Caco-2 (cell line): ENCODE measurements at regions of chr13 and their contacts with region 1.

Region 1: GRCh38 chr13:43664700-43665191 is 122.0 kb downstream of the ENOX1 start:
- DNase-seq: peak; percentile 65 to 72
- H3K4me3 ChIP-seq: no peak overlapping the region
- H3K4me3 Mint-ChIP-seq: no peak overlapping the region
- H3K27ac Mint-ChIP-seq: no peak overlapping the region
- H3K4me1 ChIP-seq: peaks cover 61% of the 10 kb centered on the region
- H3K4me1 Mint-ChIP-seq: peaks cover 38% of the 10 kb centered on the region
- H3K27me3 ChIP-seq: no peaks in the 10 kb centered on the region
- H3K27me3 Mint-ChIP-seq: no peaks in the 10 kb centered on the region
- CTCF ChIP-seq: no peak

Region 2: DNA sequence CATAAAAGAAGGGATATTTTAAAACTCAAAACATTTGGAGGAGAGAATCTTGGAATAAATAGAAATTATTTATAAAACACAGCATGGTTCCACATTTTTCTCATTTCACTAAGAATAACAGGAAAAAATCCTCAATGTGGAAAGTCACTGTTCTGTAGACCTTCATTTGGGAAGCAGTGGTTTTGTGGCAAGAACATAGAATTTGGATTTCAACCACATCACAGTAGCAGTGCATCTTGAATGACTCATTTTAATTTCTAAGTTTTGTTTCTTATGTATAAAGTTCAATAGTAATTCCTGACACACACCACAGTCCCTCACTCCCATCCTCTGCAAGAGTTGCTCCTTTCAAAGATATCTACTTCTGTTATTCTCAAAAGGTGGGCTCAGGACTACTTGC is 142.0 kb before region 1 on chr13:
- CTCF ChIA-PET with region 1: no interaction called
- POLR2A ChIA-PET with region 1: no interaction called
- intact Hi-C with region 1: no loop called
- DNase-seq: no peak
- H3K4me3 ChIP-seq: no peak overlapping the region
- H3K4me3 Mint-ChIP-seq: no peak overlapping the region
- H3K27ac Mint-ChIP-seq: no peak overlapping the region
- H3K4me1 ChIP-seq: peaks cover 2% of the 10 kb centered on the region
- H3K4me1 Mint-ChIP-seq: peaks cover 9% of the 10 kb centered on the region
- H3K27me3 ChIP-seq: no peaks in the 10 kb centered on the region
- H3K27me3 Mint-ChIP-seq: no peaks in the 10 kb centered on the region
- CTCF ChIP-seq: no peak

Region 3: GRCh38 chr13:43611281-43612273 is 53.2 kb before region 1 on chr13:
- CTCF ChIA-PET with region 1: no interaction called
- POLR2A ChIA-PET with region 1: no interaction called
- intact Hi-C with region 1: no loop called
- DNase-seq: no peak
- H3K4me3 ChIP-seq: no peak overlapping the region
- H3K4me3 Mint-ChIP-seq: no peak overlapping the region
- H3K27ac Mint-ChIP-seq: no peak overlapping the region
- H3K4me1 ChIP-seq: no peaks in the 10 kb centered on the region
- H3K4me1 Mint-ChIP-seq: no peaks in the 10 kb centered on the region
- H3K27me3 ChIP-seq: no peaks in the 10 kb centered on the region
- H3K27me3 Mint-ChIP-seq: no peaks in the 10 kb centered on the region
- CTCF ChIP-seq: no peak

Region 4: DNA sequence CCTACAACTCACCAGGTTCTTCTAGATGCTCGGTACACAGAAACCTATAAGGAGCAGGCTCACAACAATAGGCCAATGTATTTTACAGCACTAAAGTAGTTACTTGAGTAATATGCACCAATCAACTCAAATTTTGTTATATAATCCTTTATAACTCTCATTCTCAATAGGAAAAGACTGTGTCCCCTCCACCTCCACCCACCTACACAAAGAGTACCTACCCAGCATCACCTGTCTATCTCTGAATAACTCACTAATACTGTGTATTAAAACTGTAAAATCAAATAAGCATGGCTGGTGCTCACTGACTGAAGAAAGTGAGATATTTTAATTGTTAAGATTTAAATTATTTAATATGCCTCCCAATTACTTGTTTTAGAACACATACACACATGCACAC is 24.3 kb before region 1 on chr13:
- CTCF ChIA-PET with region 1: no interaction called
- POLR2A ChIA-PET with region 1: no interaction called
- intact Hi-C with region 1: no loop called
- DNase-seq: no peak
- H3K4me3 ChIP-seq: no peak overlapping the region
- H3K4me3 Mint-ChIP-seq: no peak overlapping the region
- H3K27ac Mint-ChIP-seq: no peak overlapping the region
- H3K4me1 ChIP-seq: no peaks in the 10 kb centered on the region
- H3K4me1 Mint-ChIP-seq: no peaks in the 10 kb centered on the region
- H3K27me3 ChIP-seq: no peaks in the 10 kb centered on the region
- H3K27me3 Mint-ChIP-seq: no peaks in the 10 kb centered on the region
- CTCF ChIP-seq: no peak

Region 5: GRCh38 chr13:43686557-43686956 is 21.8 kb after region 1 on chr13:
- CTCF ChIA-PET with region 1: no interaction called
- POLR2A ChIA-PET with region 1: no interaction called
- intact Hi-C with region 1: loop called (anchors 2 kb)
- DNase-seq: peak; percentile 25 to 41
- H3K4me3 ChIP-seq: no peak overlapping the region
- H3K4me3 Mint-ChIP-seq: no peak overlapping the region
- H3K27ac Mint-ChIP-seq: no peak overlapping the region
- H3K4me1 ChIP-seq: peaks cover 24% of the 10 kb centered on the region
- H3K4me1 Mint-ChIP-seq: peaks cover 17% of the 10 kb centered on the region
- H3K27me3 ChIP-seq: no peaks in the 10 kb centered on the region
- H3K27me3 Mint-ChIP-seq: no peaks in the 10 kb centered on the region
- CTCF ChIP-seq: no peak

Region 6: DNA sequence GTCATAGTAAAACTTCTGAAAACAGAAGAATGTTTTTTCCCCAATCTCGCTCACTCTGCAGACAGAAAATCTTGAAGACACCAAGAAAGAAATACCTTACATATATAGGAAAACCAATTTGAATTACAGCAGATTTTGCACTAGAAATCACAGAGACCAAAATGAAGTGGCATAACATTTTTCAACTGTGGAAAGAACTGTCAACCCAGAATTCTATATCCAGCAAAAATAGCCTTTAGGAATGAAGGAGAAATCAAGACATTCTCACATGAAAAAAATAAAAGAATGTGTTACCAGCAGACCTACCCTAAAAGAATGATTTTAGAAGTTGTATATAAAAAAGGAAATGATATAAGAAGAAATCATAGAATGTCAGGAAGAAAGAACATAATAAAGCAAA is 186.1 kb after region 1 on chr13:
- CTCF ChIA-PET with region 1: no interaction called
- POLR2A ChIA-PET with region 1: no interaction called
- intact Hi-C with region 1: no loop called
- DNase-seq: no peak
- H3K4me3 ChIP-seq: no peak overlapping the region
- H3K4me3 Mint-ChIP-seq: no peak overlapping the region
- H3K27ac Mint-ChIP-seq: no peak overlapping the region
- H3K4me1 ChIP-seq: peaks cover 24% of the 10 kb centered on the region
- H3K4me1 Mint-ChIP-seq: peaks cover 12% of the 10 kb centered on the region
- H3K27me3 ChIP-seq: no peaks in the 10 kb centered on the region
- H3K27me3 Mint-ChIP-seq: no peaks in the 10 kb centered on the region
- CTCF ChIP-seq: no peak

Region 7: GRCh38 chr13:43878892-43879754 is 214.4 kb after region 1 on chr13 and contains the start of gene CCDC122:
- CTCF ChIA-PET with region 1: no interaction called
- POLR2A ChIA-PET with region 1: no interaction called
- intact Hi-C with region 1: loop called (anchors 10 kb)
- DNase-seq: peak; percentile 83 to 90
- H3K4me3 ChIP-seq: peak within 1 kb of the TSS; percentile 88
- H3K4me3 Mint-ChIP-seq: peak within 1 kb of the TSS; percentile 96
- H3K27ac Mint-ChIP-seq: peak within 1 kb of the TSS; percentile 92
- H3K4me1 ChIP-seq: 0 out of 2 replicates have a peak, but pooled peaks cover 5% of the 10 kb centered on the region
- H3K4me1 Mint-ChIP-seq: peaks cover 13% of the 10 kb centered on the region
- H3K27me3 ChIP-seq: no peaks in the 10 kb centered on the region
- H3K27me3 Mint-ChIP-seq: no peaks in the 10 kb centered on the region
- CTCF ChIP-seq: no peak
- total RNA-seq, gene CCDC122: 15.6 and 21.2 TPM in 2 replicates